Sciatic nerve (tissue), 2 donors: ENCODE measurements at regions of chr2 and their contacts with region 1.

Region 1: DNA sequence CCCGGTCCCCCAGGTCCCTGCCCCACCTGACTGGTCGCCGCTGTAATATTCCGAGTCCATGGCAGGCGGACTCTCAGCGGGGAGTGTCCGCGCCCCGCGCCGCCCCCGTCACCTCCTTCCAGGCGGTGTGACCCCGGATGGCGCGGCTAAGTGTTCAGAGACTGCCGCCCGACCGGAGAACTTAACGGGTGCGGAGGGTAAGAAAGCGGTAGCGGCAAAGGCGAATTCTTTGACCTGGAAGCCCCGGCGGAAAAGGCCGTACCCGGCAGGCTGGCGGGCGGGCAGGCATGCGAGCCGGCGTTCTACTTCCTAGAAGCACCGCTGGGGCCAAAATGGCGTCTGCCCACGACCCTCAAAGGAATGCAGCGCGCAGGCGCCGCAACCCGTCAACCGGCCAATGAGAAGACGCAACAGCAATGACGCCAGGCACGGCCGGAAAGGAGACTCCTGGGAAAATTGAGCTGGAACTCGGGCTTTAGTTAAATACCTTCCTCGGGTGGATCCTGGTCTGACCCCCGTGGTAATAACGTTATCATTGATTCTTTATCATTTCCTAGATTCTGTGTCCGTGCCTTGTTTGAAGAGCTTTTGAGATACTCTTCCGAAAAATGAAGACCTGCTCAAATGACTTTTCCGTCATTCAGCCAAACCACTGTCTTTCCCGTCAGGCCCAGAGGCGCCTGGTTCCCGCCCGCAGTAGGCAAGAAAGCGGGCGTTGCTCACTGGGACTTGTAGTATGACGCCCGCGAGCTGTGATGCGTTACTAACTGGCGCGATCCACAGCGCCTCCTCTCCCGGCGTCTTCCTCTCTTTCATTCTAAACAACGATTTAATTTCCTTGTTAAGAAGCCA is at the start of gene IWS1:
- DNase-seq: peak; percentile 96
- ATAC-seq: peak; percentile 99
- total RNA-seq, gene IWS1: 44.4 TPM

Region 2: DNA sequence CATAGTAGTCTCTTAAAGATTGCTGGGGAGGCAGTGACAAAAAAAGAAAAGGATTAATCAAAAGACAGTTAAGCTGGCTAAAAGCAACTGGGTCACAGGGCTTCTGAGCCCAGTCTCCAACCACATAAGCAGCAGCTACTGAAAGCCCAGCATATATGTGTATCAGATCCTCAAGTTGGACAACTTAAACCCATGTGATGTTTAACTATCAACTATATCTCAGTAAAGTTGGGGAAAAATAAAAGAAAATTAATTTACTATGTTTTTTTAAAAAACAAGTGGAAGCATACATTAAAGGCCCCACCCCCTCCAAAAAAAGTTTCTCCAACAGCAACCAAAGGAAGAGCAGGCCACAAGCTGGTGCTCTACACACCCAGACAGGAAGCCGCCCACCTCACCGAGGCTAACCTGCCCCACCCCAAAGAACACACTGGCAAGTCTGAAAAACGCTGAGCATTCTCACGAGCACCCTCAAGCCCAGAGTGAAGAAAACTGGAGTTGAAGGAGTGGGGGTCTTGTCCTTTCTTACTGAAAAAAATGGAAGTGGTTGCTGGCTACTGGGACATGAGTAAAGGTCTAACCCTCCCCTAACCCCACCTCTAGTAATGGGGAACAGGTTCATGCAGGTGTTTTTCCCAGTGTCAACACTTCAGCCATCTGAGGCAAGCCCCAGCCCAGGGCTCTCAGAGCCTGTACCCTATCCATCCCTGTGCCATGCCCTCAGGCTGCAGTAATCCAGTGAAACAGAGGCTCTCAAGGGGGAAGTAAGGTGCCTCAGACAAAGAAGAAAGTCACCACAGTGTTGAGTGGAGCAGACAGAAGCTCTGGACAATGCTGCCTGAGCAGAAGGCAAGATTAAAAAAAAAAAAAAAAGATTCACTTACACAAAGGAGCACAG is 764.1 kb before region 1 on chr2:
- intact Hi-C with region 1: no loop called
- DNase-seq: no peak
- ATAC-seq: no peak

Region 3: GRCh38 chr2:127498386-127498785 is 28.0 kb before region 1 on chr2:
- intact Hi-C with region 1: no loop called
- DNase-seq: no peak
- ATAC-seq: no peak

Region 4: GRCh38 chr2:127640082-127641072 is 114.0 kb after region 1 on chr2:
- intact Hi-C with region 1: loop called (anchors 5 kb)
- DNase-seq: no peak
- ATAC-seq: no peak